Activated CD4-positive, alpha-beta T cell treated with anti-CD3 and anti-CD28 coated beads for 36 hours (primary cell): ENCODE measurements at regions of chr10 and their contacts with region 1.

Region 1: DNA sequence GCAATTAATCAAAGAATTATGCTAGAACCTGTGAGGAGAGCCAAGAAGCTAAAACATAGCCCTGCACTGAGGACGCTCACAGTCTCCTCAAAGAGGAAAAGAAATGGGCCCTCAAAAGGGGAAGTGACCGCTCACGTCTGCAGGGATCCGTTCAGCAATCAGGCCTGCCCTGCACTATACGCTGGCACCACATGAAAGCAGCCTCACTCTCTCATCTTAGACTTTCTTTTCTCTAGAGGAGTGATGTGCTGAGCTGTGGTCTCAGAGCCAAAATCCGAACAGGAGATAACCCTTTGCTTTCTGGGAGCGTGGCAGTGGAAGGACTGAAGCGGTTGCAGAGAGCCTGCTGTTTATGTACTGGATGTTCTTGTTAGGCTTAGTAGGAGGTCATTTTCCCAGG is 6.3 kb upstream of the IL2RA start:
- DNase-seq: peak; percentile 64
- ATAC-seq: peak; percentile 23
- H3K4me3 Mint-ChIP-seq: peak overlapping the region; percentile 65
- H3K27ac Mint-ChIP-seq: peak overlapping the region; percentile 95
- H3K4me1 Mint-ChIP-seq: peaks cover 90% of the 10 kb centered on the region
- H3K27me3 Mint-ChIP-seq: peaks cover 3% of the 10 kb centered on the region

Region 2: DNA sequence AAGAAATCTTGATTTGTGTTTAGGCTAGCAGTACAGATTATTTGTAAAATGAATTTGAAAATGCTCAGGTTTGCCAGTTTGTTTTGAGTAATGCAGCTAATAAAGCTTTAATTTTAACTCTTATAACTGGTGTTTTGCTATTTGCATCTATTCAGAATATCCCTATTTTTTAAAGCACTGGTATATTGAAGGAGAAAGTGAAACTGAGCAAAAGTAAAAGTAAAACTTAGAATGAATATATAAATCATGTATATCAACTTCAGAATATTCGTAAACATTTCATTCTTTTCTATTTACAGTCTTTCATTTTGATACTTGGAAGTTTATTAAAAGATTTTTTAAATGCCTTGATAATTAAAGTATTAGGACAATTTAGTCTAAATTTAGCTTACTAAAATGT is 357.6 kb before region 1 on chr10:
- CTCF ChIA-PET with region 1: no interaction called
- POLR2A ChIA-PET with region 1: no interaction called
- intact Hi-C with region 1: no loop called
- DNase-seq: no peak
- ATAC-seq: peak; percentile 49
- H3K4me3 Mint-ChIP-seq: no peak overlapping the region
- H3K27ac Mint-ChIP-seq: no peak overlapping the region
- H3K4me1 Mint-ChIP-seq: peaks cover 58% of the 10 kb centered on the region
- H3K27me3 Mint-ChIP-seq: no peaks in the 10 kb centered on the region

Region 3: GRCh38 chr10:6083523-6084475 is 15.4 kb after region 1 on chr10:
- CTCF ChIA-PET with region 1: interaction called, 60 read pairs
- POLR2A ChIA-PET with region 1: interaction called, 33 read pairs
- intact Hi-C with region 1: loop called (anchors 1 kb)
- DNase-seq: peak; percentile 85
- ATAC-seq: peak; percentile 79
- H3K4me3 Mint-ChIP-seq: peak overlapping the region; percentile 71
- H3K27ac Mint-ChIP-seq: peak overlapping the region; percentile 95
- H3K4me1 Mint-ChIP-seq: peaks cover 67% of the 10 kb centered on the region
- H3K27me3 Mint-ChIP-seq: no peaks in the 10 kb centered on the region

Region 4: GRCh38 chr10:6603142-6604125 is 535.0 kb after region 1 on chr10:
- CTCF ChIA-PET with region 1: no interaction called
- POLR2A ChIA-PET with region 1: no interaction called
- intact Hi-C with region 1: no loop called
- DNase-seq: no peak
- ATAC-seq: no peak
- H3K4me3 Mint-ChIP-seq: no peak overlapping the region
- H3K27ac Mint-ChIP-seq: no peak overlapping the region
- H3K4me1 Mint-ChIP-seq: peaks cover 68% of the 10 kb centered on the region
- H3K27me3 Mint-ChIP-seq: no peaks in the 10 kb centered on the region

Region 5: DNA sequence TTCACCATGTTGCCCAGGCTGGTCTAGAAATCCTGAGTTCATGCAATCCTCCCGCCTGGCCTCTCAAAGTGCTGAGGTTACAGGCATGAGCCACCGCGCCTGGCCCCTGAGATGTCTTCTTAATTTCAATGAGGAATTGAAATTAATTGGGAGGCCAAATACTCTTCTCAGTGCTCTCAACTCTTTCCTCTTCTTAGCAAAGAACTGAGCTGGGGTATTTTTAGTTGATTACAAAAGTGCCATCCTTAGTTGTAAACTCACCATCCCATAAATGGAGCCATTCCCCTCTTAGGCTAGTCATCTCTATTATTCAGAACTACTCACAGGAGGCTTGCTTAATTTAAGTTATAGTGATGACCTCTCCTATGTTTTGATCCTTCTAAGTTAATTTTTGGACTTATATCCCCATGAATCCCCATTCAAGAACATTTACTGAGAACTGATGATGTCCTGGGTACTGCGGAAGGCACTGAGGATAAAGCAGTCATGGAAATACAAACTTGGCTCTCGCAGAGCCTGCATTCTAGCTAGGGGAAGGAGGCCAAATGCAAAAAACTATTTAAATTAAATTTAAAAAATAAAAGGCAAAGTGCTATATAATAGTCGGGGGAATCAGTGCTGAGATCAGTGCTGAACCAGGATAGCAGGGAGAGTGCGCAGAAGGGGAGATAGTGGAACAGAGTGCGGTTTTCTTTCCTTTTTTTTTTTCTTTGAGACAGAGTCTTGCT is 1197.1 kb after region 1 on chr10:
- CTCF ChIA-PET with region 1: no interaction called
- POLR2A ChIA-PET with region 1: no interaction called
- intact Hi-C with region 1: loop called in 1 of 2 experiments (anchors 5 kb)
- DNase-seq: no peak
- ATAC-seq: no peak
- H3K4me3 Mint-ChIP-seq: no peak overlapping the region
- H3K27ac Mint-ChIP-seq: no peak overlapping the region
- H3K4me1 Mint-ChIP-seq: peaks cover 43% of the 10 kb centered on the region
- H3K27me3 Mint-ChIP-seq: no peaks in the 10 kb centered on the region